PC-9 (cell line): ENCODE measurements at regions of chr4 and their contacts with region 1.

Region 1: DNA sequence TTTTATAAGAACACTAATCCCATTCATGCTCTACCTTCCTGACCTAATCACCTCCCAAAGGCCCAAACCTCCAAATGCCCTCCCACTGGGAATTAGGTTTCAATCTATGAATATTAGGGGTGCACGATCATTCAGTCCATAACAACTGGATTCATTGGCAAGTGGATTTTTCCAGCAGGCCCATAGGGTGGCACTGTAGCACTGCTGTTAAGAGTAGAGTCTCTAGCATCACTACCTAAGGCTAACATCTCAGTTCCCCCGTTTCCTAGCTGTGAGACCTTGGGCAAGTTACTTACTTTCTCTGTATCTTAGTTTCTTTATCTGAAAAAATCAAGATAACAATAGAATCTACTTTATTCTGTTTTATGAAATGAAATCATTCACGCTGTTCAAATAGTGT is 315.8 kb downstream of the STIM2 start:
- DNase-seq: no peak
- H3K4me3 ChIP-seq: no peak overlapping the region
- H3K27ac ChIP-seq: no peak overlapping the region
- H3K4me1 ChIP-seq: no peaks in the 10 kb centered on the region
- H3K27me3 ChIP-seq: no peaks in the 10 kb centered on the region
- CTCF ChIP-seq: peak; percentile 40

Region 2: GRCh38 chr4:27129871-27130366 is 46.5 kb before region 1 on chr4:
- CTCF ChIA-PET with region 1: no interaction called
- POLR2A ChIA-PET with region 1: no interaction called
- intact Hi-C with region 1: no loop called
- DNase-seq: no peak
- H3K4me3 ChIP-seq: no peak overlapping the region
- H3K27ac ChIP-seq: no peak overlapping the region
- H3K4me1 ChIP-seq: no peaks in the 10 kb centered on the region
- H3K27me3 ChIP-seq: no peaks in the 10 kb centered on the region
- CTCF ChIP-seq: no peak

Region 3: DNA sequence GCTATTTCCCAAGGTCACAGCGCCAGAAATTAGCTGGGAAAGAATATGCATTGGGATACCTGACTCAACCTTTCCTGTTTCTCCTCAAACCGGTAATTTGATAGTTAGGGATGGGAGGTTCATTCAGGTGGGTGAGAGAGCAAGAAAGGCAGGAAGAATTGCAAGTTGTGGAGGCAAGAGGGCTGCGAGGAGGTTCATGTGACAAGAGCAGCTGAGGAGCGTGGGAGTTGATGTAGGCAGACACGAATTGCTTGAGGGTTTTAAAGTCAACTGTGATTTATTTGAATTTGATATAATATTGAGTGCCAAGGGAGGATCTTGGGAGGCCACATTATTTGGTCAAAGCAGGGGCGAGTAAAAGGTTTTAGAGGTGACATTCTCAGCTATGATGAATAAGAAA is 13.3 kb after region 1 on chr4:
- CTCF ChIA-PET with region 1: no interaction called
- POLR2A ChIA-PET with region 1: no interaction called
- intact Hi-C with region 1: no loop called
- DNase-seq: no peak
- H3K4me3 ChIP-seq: no peak overlapping the region
- H3K27ac ChIP-seq: no peak overlapping the region
- H3K4me1 ChIP-seq: no peaks in the 10 kb centered on the region
- H3K27me3 ChIP-seq: no peaks in the 10 kb centered on the region
- CTCF ChIP-seq: no peak

Region 4: GRCh38 chr4:27357283-27357682 is 180.9 kb after region 1 on chr4:
- CTCF ChIA-PET with region 1: interaction called, 12 read pairs
- POLR2A ChIA-PET with region 1: no interaction called
- intact Hi-C with region 1: no loop called
- DNase-seq: no peak
- H3K4me3 ChIP-seq: no peak overlapping the region
- H3K27ac ChIP-seq: no peak overlapping the region
- H3K4me1 ChIP-seq: no peaks in the 10 kb centered on the region
- H3K27me3 ChIP-seq: no peaks in the 10 kb centered on the region
- CTCF ChIP-seq: peak; percentile 36; the same call in 1 of the 2 replicates